Dorsolateral prefrontal cortex (tissue), 120 donors: ENCODE measurements at regions of chr2 and their contacts with region 1.

Region 1: DNA sequence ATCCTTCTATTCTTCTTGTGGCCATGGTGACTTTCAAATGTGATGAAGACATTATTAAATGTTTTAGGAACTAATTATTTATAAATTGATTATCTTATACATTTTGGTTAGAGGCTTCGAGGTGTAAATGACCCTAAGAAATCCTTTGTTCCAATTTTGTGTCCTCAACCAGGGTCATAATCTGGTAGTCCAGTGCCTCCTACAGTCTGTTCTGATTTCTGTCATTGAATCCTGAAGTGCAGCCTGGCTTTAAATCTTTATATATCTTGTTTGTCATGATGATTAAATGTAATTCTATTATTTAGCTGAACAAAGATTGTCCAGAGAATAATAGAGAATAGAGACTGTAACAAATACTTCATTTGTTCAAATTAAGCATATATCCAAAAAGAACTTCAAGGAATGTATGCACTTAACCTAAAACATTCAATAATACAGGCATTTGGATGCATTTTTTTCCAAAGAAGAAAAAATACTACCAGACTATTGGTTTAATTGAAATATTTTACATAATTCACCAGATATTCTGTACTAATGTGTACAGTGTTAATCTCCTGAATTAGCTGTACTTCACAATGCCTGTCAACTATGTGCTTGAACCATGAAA is 89.8 kb downstream of the PRPF40A start:
- DNase-seq: no peak
- H3K4me3 ChIP-seq: no peak overlapping the region
- H3K27ac ChIP-seq: peak overlapping the region in 54 of 59 donors; percentile 10 to 86 (median 66)
- H3K27me3 ChIP-seq: no peaks in the 10 kb centered on the region
- CTCF ChIP-seq: peak; percentile 20 to 91 (median 68)

Region 2: GRCh38 chr2:152326710-152327109 is 300.7 kb before region 1 on chr2:
- intact Hi-C with region 1: no loop called
- DNase-seq: no peak
- H3K4me3 ChIP-seq: no peak overlapping the region
- H3K27ac ChIP-seq: no peak overlapping the region
- H3K27me3 ChIP-seq: no peaks in the 10 kb centered on the region
- CTCF ChIP-seq: no peak

Region 3: DNA sequence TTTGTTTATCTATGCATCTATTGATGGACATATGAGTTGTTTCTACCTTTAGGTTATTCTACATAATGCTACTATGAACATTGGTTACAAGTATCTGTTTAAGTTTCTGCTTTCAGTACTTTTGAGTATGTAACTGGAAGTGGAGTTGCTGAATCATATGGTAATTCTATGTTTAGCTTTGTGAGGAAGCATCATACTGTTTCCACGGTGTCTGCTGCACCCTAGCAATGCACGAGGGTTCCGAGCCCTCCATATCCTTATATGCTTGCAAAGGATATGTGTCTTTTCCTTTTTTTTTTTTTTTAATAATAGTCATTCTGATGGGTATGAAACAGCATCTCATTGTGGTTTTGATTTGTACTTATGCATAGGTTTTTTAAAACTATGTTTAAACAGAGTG is 208.8 kb before region 1 on chr2:
- intact Hi-C with region 1: loop called in 1 of 2 experiments (anchors 5 kb)
- DNase-seq: peak in 5 of 10 donors; percentile 56 to 65 (median 62)
- H3K4me3 ChIP-seq: peak overlapping the region in 11 of 59 donors; percentile 1 to 47 (median 10)
- H3K27ac ChIP-seq: peak overlapping the region; percentile 2 to 100 (median 84)
- H3K27me3 ChIP-seq: no peaks in the 10 kb centered on the region
- CTCF ChIP-seq: peak in 52 of 56 donors; percentile 8 to 69 (median 34)

Region 4: GRCh38 chr2:152499896-152500735 is 127.3 kb before region 1 on chr2:
- intact Hi-C with region 1: loop called in 1 of 2 experiments (anchors 10 kb)
- DNase-seq: no peak
- H3K4me3 ChIP-seq: peak overlapping the region in 22 of 59 donors; percentile 0 to 26 (median 12)
- H3K27ac ChIP-seq: peak overlapping the region; percentile 26 to 98 (median 91)
- H3K27me3 ChIP-seq: no peaks in the 10 kb centered on the region
- CTCF ChIP-seq: peak in 3 of 56 donors; percentile 3 to 13 (median 5)

Region 5: DNA sequence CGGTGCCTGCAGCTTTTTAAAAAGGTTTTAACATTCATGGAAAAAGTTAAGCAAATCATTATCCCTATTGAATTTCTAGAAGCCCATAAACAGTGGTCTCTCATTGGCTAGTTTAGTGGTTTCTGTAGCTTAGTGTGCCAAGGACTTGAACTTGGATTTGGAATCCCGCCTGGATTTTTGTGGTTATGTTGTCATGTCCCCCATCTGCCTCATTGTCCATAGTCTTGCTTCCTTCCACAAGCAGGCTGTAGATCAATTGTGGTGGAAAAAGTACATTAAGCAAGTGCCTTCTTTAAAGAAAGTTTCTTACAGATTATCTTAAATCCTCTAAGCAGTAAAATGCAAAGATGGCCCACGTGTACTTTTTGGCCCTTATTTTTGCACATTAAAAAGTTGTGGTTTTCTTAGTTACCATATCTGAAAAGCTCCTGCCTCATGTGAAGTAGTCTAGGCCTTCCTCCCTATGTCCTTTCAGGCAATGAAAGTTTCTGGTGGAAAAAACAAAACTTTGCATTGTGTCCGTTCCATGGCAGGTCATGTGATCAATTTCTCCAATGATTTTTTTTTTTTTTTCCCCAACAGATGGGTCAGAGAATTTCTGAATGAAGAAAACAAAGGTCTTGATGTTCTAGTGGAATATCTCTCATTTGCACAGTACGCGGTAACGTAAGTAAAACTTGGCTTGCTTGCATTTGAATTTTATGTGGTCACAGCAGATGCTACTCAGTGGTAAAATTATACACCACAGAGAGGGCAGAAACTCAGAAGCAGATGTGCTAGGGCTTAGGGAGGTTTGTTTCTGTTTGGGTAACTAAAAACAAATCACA is 69.1 kb before region 1 on chr2:
- intact Hi-C with region 1: loop called in 1 of 2 experiments (anchors 10 kb)
- DNase-seq: no peak
- H3K4me3 ChIP-seq: peak overlapping the region in 9 of 59 donors; percentile 3 to 21 (median 12)
- H3K27ac ChIP-seq: peak overlapping the region in 58 of 59 donors; percentile 17 to 96 (median 81)
- H3K27me3 ChIP-seq: no peaks in the 10 kb centered on the region
- CTCF ChIP-seq: peak in 1 of 56 donors; percentile 28

Region 6: GRCh38 chr2:152762202-152762601 is 134.7 kb after region 1 on chr2:
- intact Hi-C with region 1: no loop called
- DNase-seq: no peak
- H3K4me3 ChIP-seq: peak overlapping the region in 1 of 59 donors; percentile 7
- H3K27ac ChIP-seq: no peak overlapping the region
- H3K27me3 ChIP-seq: no peaks in the 10 kb centered on the region
- CTCF ChIP-seq: no peak

Region 7: GRCh38 chr2:153222231-153223165 is 595.0 kb after region 1 on chr2:
- intact Hi-C with region 1: no loop called
- DNase-seq: no peak
- H3K4me3 ChIP-seq: no peak overlapping the region
- H3K27ac ChIP-seq: no peak overlapping the region
- H3K27me3 ChIP-seq: peaks cover 0 to 12% (median 0%) of the 10 kb centered on the region in 45 donors
- CTCF ChIP-seq: no peak